Calu3 (cell line): ENCODE measurements at regions of chr5 and their contacts with region 1.

Region 1: DNA sequence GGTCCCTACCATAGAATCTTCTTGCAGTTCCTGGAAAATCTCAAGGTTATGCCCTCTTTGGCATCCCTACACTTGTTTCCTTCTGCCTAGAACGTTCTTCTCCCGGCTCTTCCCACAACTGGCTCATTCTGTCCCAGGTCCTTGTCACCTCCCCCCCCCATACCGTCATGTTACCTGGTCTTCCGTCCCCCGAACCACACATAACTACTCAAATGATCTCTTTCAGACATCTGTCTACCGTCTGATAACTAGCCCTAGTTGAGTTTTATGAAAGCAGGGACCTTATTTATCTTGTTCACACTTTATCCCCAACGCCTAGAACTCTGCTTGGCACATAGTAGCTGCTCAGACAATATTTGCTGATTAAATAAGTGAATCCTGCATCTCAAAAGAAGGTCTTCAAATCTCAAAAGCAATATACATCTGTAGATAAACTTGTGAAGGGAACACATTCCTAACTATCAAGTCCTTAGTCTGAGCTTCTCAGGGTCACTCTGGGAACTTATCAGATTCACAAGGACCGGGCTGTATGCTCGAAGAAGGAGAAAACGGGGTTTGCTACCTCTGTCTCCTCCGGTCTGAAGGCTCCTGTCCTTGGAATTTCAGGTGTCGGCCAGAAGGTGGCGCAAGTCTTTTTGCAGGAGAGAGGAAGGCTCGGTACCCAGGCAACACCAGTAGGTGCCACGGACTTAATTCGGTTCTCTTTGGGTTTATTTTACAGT is 30.0 kb downstream of the LCP2 start:
- DNase-seq: peak; percentile 82
- H3K4me3 Mint-ChIP-seq: no peak overlapping the region
- H3K27ac Mint-ChIP-seq: no peak overlapping the region
- H3K4me1 Mint-ChIP-seq: peaks cover 14% of the 10 kb centered on the region
- H3K27me3 Mint-ChIP-seq: peaks cover 70% of the 10 kb centered on the region
- CTCF ChIP-seq: peak; percentile 82

Region 2: GRCh38 chr5:170338933-170339779 is 71.6 kb after region 1 on chr5:
- CTCF ChIA-PET with region 1: interaction called, 6 read pairs
- intact Hi-C with region 1: loop called (anchors 5 kb)
- DNase-seq: peak; percentile 44
- H3K4me3 Mint-ChIP-seq: no peak overlapping the region
- H3K27ac Mint-ChIP-seq: no peak overlapping the region
- H3K4me1 Mint-ChIP-seq: no peaks in the 10 kb centered on the region
- H3K27me3 Mint-ChIP-seq: peaks cover 60% of the 10 kb centered on the region
- CTCF ChIP-seq: peak; percentile 73